G401 (cell line): ENCODE measurements at regions of chr7 and their contacts with region 1.

Region 1: DNA sequence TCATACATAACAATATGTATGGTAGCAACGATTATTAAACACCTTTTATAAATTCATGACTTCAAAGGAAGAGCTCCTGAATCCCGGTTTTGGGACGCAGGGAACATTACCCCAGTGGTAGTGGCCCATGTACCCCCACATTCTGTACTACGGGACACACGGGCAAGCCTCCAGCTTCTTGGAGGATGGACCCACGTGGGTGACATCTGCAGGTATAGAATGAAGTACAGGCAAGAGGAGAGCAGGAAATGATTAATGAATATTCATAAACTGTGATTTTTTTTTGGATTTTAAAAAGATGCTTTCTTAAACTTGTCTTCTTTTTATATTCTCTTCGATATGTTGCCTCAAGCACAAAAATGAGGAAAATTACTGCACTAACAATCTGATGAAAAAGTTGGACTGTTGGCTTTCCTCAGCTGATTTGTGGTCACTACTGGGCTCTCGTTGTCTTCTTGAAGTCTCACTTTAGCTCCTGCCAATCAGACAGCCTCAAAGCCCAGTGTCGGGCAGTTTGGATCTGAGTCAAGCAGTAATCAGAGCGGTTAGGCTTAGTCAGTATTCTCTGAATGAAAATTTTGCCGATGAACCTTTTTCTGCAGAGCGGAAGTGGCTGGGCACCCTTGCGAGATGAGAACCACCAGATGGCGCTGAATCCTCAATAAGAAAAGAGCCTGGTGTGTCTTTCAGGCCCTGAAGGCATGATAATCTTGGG is 157.7 kb upstream of the CDCA7L start:
- DNase-seq: peak; percentile 74

Region 2: GRCh38 chr7:22025968-22026367 is 77.4 kb before region 1 on chr7:
- in situ Hi-C with region 1: no loop called
- DNase-seq: no peak

Region 3: GRCh38 chr7:22179442-22179879 is 76.0 kb after region 1 on chr7:
- in situ Hi-C with region 1: no loop called
- DNase-seq: no peak

Region 4: GRCh38 chr7:22452142-22452959 is 348.9 kb after region 1 on chr7:
- in situ Hi-C with region 1: loop called (anchors 25 kb)
- DNase-seq: peak; percentile 77